ENCODE measurements at regions of chr17 and their contacts with region 1.

Region 1: GRCh38 chr17:37233036-37233435 is 142.7 kb upstream of the C17orf78 start:
- DNase-seq: no peak
- H3K4me3 ChIP-seq: no peak overlapping the region
- CTCF ChIP-seq: no peak

Region 2: DNA sequence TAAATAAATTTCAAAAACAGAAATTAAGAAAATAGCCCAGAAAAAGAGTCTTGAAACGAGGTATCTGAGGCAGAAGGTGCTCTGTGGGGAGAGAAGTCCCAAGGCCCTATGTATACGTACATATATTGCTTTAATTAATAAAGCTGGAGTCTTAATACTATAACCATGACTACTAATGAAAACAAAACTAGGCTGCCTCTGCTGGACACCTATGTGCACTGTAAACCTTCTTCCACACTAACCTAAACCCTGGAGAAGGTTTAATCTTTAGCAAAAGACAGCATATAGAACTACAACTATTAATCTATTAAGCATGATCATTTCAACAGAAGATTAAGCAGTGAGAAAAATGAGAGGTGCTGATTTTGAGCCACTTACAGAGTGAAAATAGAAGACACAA is 11.2 kb before region 1 on chr17:
- CTCF ChIA-PET with region 1: interaction called, 30 read pairs
- POLR2A ChIA-PET with region 1: no interaction called
- DNase-seq: no peak
- H3K4me3 ChIP-seq: no peak overlapping the region
- CTCF ChIP-seq: no peak